ENCODE measurements at regions of chr3 and their contacts with region 1.

Region 1: GRCh38 chr3:14885292-14885691 is 62.1 kb upstream of the NR2C2 start:
- DNase-seq: peak in 3 of 5 donors; percentile 18 to 34 (median 30)
- H3K4me3 ChIP-seq: peak overlapping the region; percentile 13 to 21
- H3K4me3 Mint-ChIP-seq: peak overlapping the region; percentile 55 to 86 (median 66)
- H3K27ac ChIP-seq: no peak overlapping the region
- H3K27ac Mint-ChIP-seq: peak overlapping the region; percentile 48 to 91 (median 82)
- H3K4me1 ChIP-seq: peaks cover 67% of the 10 kb centered on the region
- H3K4me1 Mint-ChIP-seq: peaks cover 44 to 79% (median 61%) of the 10 kb centered on the region in 4 donors
- H3K27me3 ChIP-seq: no peaks in the 10 kb centered on the region
- H3K27me3 Mint-ChIP-seq: no peaks in the 10 kb centered on the region

Region 2: GRCh38 chr3:14898929-14899328 is 13.6 kb after region 1 on chr3:
- CTCF ChIA-PET with region 1: interaction called, 3 read pairs
- POLR2A ChIA-PET with region 1: interaction called, 18 read pairs
- intact Hi-C with region 1: no loop called
- DNase-seq: no peak
- H3K4me3 ChIP-seq: no peak overlapping the region
- H3K4me3 Mint-ChIP-seq: no peak overlapping the region
- H3K27ac ChIP-seq: no peak overlapping the region
- H3K27ac Mint-ChIP-seq: no peak overlapping the region
- H3K4me1 ChIP-seq: no peaks in the 10 kb centered on the region
- H3K4me1 Mint-ChIP-seq: peaks cover 0 to 3% (median 0%) of the 10 kb centered on the region in 4 donors
- H3K27me3 ChIP-seq: no peaks in the 10 kb centered on the region
- H3K27me3 Mint-ChIP-seq: peaks cover 10 to 15% of the 10 kb centered on the region in 2 donors